Activated CD4-positive, alpha-beta T cell treated with anti-CD3 and anti-CD28 coated beads for 36 hours (primary cell): ENCODE measurements at regions of chr1 and their contacts with region 1.

Region 1: DNA sequence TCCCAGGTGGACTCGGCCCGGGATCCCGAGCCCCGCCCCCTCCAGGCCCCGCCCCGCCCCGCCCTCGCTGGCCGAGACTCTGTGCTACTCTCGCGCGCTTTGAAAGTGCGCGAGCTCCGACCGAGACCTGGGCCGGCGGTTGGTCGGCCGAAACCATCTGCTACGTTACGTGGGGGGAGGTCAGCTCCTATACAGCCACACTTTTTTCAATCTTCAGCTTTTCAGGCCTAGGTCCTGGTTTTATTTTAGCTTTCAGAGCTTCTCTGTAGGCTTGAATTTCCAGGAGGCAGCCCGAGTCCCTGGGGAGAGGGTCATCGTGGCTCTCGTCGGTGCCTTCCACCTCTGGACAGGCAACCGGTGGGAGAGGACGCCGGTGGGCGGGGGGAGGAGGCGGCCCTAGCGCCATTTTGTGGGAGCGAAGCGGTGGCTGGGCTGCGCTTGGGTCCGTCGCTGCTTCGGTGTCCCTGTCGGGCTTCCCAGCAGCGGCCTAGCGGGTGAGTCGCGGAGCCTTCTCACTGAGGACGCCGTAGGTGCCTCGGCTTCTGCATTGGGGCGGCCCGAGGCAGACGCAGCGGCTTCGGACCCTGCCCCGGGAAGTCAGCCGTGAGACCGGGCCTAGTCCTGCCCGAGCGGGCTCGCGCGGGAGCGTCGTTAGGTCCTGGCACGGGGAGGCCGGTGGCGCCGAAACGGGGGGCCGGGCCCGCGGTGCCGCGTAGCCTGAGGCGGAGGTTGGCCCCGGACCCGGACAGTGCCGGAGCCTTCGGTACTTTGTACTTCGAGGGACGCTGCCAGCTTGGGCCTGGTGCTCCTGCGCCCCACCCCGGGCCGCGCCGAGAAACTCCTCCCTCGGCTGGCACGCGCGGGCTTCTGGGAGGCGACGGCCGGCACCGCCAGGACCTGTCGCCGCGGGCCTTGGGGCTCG is at the start of gene TARDBP:
- DNase-seq: peak; percentile 94
- ATAC-seq: peak; percentile 89
- H3K4me3 Mint-ChIP-seq: peak within 1 kb of the TSS; percentile 93
- H3K27ac Mint-ChIP-seq: peak within 1 kb of the TSS; percentile 99
- H3K4me1 Mint-ChIP-seq: peaks cover 30% of the 10 kb centered on the region
- H3K27me3 Mint-ChIP-seq: no peaks in the 10 kb centered on the region
- total RNA-seq, gene TARDBP: 180 to 190 TPM

Region 2: DNA sequence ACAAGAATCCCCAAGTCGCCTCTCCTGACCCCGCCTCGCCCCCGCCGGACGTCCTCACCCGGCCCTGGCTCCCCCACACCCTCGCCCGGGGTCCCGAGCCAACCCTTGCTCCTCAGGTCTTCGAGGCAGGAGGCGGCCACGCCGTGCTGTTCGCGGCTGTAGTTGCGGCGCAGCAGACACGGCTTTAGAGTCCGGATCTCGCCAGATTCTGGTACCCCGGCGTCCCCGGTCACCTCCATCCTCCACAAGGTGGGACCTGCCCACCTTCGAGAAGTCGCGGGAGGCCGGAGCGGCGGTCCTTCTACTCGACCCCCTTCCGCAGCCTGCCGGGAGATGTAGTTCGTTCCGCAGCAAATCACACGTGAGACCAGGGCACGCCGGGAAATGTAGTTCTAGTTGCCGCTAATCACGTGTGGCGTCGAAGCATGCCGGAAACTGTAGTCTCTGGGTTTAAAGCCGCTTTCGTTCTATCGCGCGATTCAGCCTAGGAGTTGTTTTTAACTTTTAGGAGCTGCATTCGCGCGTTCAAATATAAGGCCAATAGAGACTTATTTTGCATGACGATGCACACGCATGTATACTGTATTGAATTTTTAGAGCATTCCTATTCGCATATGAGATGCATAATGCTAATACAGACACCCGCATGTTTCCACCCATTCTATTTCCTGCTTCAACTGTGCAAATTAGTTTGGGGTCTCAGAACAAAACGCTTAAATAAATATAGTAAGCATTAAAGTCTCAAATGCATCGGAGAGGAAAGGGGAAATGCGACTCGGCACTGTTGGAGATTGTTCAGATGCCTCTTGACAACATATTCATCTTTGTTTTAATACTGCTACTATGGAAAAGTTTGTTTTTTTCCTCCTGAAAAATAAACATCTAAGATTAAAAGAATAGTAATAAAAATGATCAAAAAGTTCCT is 540.0 kb before region 1 on chr1 and contains the start of gene DFFA:
- CTCF ChIA-PET with region 1: no interaction called
- POLR2A ChIA-PET with region 1: no interaction called
- intact Hi-C with region 1: loop called in 1 of 2 experiments (anchors 1 kb)
- DNase-seq: peak; percentile 96
- ATAC-seq: peak; percentile 83
- H3K4me3 Mint-ChIP-seq: peak within 1 kb of the TSS; percentile 97
- H3K27ac Mint-ChIP-seq: peak within 1 kb of the TSS; percentile 92
- H3K4me1 Mint-ChIP-seq: peaks cover 38% of the 10 kb centered on the region
- H3K27me3 Mint-ChIP-seq: no peaks in the 10 kb centered on the region
- total RNA-seq, gene DFFA: 45.7 to 46.4 TPM

Region 3: DNA sequence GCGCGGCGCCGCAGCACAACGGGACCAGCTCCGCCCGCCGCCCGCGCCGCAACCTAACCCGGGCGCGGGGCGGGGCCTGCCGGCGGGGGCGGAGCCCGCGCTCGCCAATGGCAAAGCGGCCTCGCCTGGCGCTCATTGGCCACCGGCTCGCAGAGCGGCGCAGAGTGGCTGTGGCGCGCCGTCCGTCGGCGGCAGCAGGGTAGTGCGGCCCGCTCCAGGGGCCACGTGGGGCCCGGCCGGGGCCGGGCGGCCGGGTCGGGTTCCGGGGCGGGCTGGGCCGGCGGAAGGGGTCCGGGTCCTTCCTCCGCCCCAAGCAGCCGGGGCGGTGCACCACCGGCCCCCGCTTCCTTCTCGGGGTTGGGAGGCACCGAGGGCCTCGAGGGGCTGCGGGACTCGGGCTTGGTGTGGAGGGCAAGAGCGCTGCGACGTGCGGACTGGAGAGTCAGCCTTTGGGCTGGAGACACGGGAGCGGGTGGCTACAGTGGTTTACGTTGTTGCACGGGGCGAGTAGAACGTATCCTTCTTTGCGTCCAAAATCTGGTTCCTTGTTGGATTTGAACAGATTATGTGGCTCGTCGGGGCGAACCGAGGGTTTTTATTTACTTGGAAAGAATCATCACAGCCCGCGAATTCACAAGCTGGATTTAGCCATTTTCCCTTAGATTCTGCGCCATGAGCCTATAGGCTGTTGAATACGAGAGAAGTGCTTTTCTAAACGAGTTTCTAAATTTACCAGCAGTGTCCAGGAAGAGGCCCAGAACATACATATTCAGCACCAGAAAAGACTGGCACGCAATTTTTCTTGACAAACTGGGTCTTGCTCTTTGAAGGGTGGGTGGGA is 47.7 kb after region 1 on chr1 and contains the start of gene SRM:
- CTCF ChIA-PET with region 1: interaction called, 4 read pairs
- POLR2A ChIA-PET with region 1: interaction called, 3 read pairs
- intact Hi-C with region 1: loop called (anchors 1 kb)
- DNase-seq: peak; percentile 95
- ATAC-seq: peak; percentile 98
- H3K4me3 Mint-ChIP-seq: peak within 1 kb of the TSS; percentile 93
- H3K27ac Mint-ChIP-seq: peak within 1 kb of the TSS; percentile 94
- H3K4me1 Mint-ChIP-seq: peaks cover 41% of the 10 kb centered on the region
- H3K27me3 Mint-ChIP-seq: no peaks in the 10 kb centered on the region
- total RNA-seq, gene SRM: 180 to 242 TPM

Region 4: DNA sequence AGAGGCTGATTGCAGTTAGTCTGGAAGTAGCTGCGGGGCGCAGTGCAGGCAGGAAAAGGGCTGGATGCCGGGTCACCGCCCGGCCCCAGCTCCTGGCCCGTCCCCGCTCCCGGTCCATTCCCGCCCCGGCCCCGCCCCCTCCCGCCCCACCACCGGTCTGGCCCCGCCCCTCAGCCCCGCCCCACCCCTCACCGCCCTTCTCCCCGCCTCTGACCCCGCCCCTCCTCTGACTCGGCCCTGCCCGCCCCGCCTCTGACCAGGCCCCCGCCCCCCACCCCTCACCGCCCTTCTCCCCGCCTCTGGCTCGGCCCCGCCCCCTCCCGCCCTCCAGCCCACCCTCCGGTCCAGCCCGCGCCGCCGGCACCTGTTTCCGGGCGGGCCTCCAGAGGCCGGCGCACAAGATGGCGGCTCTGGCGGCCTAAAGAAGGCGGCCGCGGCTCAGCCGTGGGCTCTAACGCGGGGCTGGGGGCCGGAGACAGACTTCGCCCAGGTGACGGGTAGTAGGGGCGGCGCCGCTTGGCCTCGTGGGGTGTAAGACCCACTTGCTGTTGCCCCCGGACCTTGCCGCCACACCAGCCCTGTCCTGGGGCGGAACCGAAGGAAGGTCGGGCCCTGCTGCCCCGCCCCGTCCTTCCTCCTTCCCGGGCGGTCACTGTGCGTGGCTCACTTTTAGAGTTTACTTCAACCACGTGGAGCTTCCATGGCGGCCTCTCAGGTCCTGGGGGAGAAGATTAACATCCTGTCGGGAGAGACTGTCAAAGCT is 260.5 kb after region 1 on chr1 and contains the start of gene UBIAD1:
- CTCF ChIA-PET with region 1: no interaction called
- POLR2A ChIA-PET with region 1: no interaction called
- intact Hi-C with region 1: loop called in 1 of 2 experiments (anchors 1 kb)
- DNase-seq: peak; percentile 95
- ATAC-seq: peak; percentile 84
- H3K4me3 Mint-ChIP-seq: peak within 1 kb of the TSS; percentile 95
- H3K27ac Mint-ChIP-seq: peak within 1 kb of the TSS; percentile 91
- H3K4me1 Mint-ChIP-seq: peaks cover 29% of the 10 kb centered on the region
- H3K27me3 Mint-ChIP-seq: no peaks in the 10 kb centered on the region
- total RNA-seq, gene UBIAD1: 29.2 to 32.0 TPM

Region 5: DNA sequence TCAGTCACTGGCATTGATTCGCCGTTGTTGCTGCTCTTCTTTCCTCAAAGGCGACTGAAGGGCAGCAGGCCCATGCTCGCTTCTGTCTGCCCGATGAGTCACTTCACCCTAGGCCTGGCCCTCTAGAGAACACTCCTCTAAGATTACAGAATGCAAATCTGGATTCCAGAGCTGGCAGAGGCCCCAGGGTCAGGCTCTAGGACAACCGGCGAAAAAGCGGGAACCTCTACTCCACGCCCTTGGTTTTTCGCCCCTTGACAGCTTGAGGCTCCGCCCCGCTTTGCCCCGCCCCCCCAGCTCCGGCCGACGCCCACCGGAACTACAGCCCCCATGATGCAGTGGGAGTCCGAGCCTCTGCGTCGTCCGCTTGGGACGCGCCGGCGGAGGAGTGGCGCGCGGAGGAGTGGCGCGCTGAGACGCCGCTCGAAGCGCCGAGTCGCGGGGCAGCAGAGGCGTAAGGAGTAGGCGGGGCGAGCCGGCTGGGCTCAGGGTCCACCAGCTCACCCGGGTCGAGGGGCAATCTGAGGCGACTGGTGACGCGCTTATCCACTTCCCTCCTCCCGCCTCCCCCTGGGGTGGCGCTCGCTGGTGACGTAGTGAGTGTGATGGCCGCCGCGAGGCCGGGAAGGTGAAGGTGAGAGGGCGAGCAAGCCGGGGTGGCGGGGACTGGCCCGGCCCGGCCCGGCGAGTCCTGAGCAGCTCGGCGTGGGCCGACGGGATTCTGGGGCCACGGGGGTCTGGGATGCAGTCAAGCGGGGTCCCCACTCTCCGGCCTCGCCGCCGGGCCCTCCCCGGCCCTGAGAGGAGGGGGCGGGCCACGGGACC is 967.6 kb after region 1 on chr1 and contains the start of gene MFN2:
- CTCF ChIA-PET with region 1: no interaction called
- POLR2A ChIA-PET with region 1: no interaction called
- intact Hi-C with region 1: loop called in 1 of 2 experiments (anchors 1 kb)
- DNase-seq: peak; percentile 96
- ATAC-seq: peak; percentile 93
- H3K4me3 Mint-ChIP-seq: peak within 1 kb of the TSS; percentile 97
- H3K27ac Mint-ChIP-seq: peak within 1 kb of the TSS; percentile 94
- H3K4me1 Mint-ChIP-seq: peaks cover 36% of the 10 kb centered on the region
- H3K27me3 Mint-ChIP-seq: no peaks in the 10 kb centered on the region
- total RNA-seq, gene MFN2: 52.5 to 71.6 TPM